ENCODE measurements at regions of chr22 and their contacts with region 1.

Region 1: GRCh38 chr22:44819971-44820631 is 67.7 kb downstream of the ARHGAP8 start:
- DNase-seq: no peak
- H3K4me3 ChIP-seq: no peak overlapping the region
- H3K27ac ChIP-seq: no peak overlapping the region
- H3K4me1 ChIP-seq: no peaks in the 10 kb centered on the region
- H3K27me3 ChIP-seq: no peaks in the 10 kb centered on the region
- CTCF ChIP-seq: no peak

Region 2: GRCh38 chr22:44753544-44754194 is 66.4 kb before region 1 on chr22:
- CTCF ChIA-PET with region 1: interaction called, 6 read pairs
- dilution Hi-C with region 1: no loop called
- in situ Hi-C with region 1: no loop called
- intact Hi-C with region 1: loop called (anchors 5 kb)
- DNase-seq: peak; percentile 74
- H3K4me3 ChIP-seq: peak overlapping the region; percentile 83 to 98 (median 85)
- H3K27ac ChIP-seq: peak overlapping the region; percentile 36
- H3K4me1 ChIP-seq: peaks cover 35% of the 10 kb centered on the region
- H3K27me3 ChIP-seq: no peaks in the 10 kb centered on the region
- CTCF ChIP-seq: no peak

Region 3: DNA sequence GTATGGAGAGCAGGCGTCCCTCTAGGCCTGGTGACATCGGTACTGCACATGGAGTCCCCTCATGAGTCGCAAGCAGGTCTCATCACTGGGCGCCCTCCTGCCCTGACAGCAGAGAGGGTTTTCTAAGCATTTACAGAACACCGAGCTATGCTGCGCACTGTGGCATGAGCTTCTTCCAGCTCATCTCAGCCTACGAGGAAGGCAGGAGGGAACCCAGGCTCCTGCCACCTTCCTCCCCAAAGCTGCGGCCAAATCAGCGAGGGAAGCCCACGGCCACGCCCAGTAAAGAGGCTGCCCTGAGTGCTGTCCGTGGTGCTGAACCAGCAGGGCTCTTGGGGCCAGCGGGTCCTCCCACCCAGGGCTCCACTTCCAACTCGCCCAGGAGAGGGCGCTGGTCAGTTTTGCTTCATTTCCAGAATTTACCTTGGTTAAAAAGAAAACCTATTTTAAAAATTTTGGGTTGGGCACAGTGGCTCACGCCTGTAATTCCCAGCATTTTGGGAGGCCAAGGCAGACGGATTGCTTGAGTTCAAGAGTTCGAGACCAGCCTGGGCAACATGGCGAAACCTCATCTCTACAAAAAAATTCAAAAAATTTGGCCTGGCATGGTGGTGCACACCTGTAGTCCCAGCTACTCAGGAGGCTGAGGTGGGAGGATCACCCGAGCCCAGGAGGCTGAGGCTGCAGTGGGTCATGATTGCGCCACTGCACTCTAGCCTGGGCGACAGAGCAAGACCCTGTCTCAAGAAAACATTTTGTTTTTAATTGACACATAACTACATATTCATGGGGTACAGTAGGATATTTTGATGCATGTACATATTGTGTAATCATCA is 155.5 kb after region 1 on chr22:
- CTCF ChIA-PET with region 1: no interaction called
- dilution Hi-C with region 1: no loop called
- in situ Hi-C with region 1: no loop called
- intact Hi-C with region 1: loop called (anchors 2 kb)
- DNase-seq: peak; percentile 68
- H3K4me3 ChIP-seq: no peak overlapping the region
- H3K27ac ChIP-seq: no peak overlapping the region
- H3K4me1 ChIP-seq: no peaks in the 10 kb centered on the region
- H3K27me3 ChIP-seq: peaks cover 3% of the 10 kb centered on the region
- CTCF ChIP-seq: peak; percentile 62 to 85

Measured in mammary epithelial cell (primary cell).